Tibial artery (tissue), 4 donors: ENCODE measurements at regions of chr14 and their contacts with region 1.

Region 1: DNA sequence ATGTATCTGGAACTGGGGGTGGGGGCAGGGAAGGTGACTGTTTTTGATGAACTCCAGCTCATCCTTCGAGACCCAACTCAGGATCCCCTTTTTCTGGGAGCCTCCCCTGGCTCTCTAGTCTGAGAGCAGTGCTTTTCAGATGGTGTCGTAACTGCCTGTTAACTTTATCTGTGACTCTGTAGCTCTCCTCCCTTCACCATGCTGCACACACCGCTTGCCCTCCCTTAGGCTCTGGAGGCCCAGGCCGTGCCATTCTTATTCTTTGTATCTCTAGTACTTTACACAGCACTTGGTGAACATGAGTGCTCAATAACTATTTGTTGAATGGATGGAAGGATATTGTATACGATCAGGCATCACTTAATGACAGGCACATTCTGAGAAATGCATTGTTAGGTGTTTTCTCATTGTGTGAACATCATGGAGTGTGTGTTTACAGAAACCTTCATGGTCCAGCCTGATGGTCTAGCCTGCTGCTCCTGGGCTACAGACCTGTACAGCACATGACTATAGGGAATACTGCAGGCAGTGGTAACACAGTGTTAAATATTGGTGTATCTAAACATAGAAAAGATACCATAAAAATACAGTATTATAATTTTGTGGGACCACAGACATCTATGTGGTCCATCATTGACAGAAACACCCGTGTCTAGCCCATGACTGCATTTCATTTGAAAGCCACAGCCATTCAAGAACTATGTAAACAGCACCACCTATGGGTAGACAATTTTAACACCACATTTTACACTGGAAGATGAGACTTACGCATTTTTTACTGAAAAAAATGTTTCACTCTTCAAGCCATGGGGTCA is 91.8 kb downstream of the EML1 start:
- DNase-seq: no peak
- H3K4me3 ChIP-seq: no peak overlapping the region
- H3K27ac ChIP-seq: no peak overlapping the region
- H3K4me1 ChIP-seq: peaks cover 0 to 7% (median 4%) of the 10 kb centered on the region in 4 donors
- H3K27me3 ChIP-seq: no peaks in the 10 kb centered on the region
- CTCF ChIP-seq: peak; percentile 76 to 79

Region 2: DNA sequence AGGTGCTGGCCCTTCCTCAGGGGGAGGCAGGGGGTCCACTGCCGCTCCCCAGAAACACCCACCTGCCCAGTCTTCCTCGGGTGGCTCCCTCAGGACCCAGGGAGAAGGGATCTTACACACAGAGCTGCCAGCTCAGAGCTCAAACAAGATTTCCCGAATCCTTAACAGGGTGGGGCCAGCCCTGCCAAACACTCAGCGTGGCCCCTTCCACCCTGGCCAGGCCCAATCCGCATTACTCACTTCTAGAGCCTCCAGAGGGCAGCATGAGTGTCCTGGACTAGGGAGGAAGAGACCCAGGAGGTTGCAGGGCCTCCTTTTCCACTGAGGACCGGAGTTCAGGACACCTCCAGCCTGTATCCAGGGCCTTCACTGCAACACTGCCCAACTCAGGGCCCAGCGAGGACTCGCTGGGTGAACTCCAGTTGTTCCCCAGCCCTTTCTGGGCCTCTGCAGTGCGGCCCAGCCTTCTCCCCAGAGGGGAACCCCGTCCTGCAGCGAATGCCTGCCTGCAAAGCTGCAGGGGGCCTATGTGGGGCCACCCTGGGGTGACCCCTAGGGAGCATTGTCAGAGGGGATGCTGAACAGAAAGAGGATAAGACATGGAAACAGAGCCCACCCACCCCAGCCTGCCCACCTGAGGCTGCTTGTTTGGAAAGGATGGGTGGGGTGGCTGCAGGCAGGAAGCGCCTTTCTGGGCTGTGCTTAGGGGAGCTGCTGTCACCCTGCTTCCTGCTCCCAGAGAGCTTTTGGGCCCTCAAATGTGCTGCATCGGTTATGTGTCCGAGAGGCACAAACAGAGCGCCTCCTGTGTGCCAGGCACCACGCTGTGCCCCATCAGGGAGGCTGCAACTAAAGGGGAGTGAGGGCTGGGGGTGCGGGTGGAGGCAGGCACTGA is 360.0 kb before region 1 on chr14:
- intact Hi-C with region 1: loop called (anchors 5 kb)
- DNase-seq: no peak
- H3K4me3 ChIP-seq: no peak overlapping the region
- H3K27ac ChIP-seq: no peak overlapping the region
- H3K4me1 ChIP-seq: peaks cover 0 to 15% (median 0%) of the 10 kb centered on the region in 4 donors
- H3K27me3 ChIP-seq: no peaks in the 10 kb centered on the region
- CTCF ChIP-seq: no peak

Region 3: DNA sequence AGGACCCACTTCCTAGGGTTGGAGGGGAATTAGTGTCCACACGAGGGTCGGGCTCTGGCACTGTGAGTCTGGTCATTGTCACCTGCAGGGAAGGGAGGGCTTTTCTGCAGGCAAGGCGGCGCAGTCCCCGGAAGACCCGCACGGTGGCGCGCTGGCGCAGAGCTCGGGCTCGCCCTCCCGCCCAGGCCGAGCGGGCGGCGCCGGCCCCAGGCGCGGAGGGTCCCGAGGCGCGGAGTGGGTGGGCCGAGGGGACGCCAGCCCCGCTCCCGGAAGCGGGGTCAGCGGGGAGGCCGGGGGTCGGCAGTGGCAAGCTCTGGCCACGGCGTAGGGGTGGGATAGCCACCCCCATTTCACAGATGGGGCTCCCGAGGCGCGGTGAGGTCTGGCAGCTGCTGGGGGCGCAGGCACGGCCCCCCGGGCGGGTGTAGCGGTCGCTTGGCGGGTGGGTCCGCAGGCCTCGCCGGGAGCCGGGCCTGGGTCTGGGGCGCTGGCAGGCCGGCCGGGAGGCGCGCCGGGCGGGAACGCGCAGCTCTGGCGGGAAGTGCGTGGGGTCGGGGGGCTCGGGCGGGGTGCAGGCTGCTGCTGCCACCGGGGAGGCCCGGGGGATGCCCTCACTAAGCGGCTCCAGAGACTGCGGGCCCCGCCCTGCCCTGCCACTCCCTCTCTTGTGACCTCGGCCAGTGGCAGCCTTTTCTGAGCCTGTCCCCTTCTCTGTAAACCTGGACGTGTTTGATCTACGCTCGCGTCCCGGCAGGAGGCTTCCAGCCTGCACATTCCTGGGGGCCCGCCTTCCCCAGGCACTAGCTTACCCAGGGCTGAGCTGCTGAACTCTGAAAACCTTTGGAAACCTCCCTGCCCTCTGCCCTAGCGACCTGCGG is 154.8 kb before region 1 on chr14:
- intact Hi-C with region 1: loop called (anchors 1 kb)
- DNase-seq: peak in 1 of 2 donors; percentile 81
- H3K4me3 ChIP-seq: peak overlapping the region; percentile 50 to 54
- H3K27ac ChIP-seq: peak overlapping the region in 1 of 2 donors; percentile 27
- H3K4me1 ChIP-seq: peaks cover 0 to 48% (median 20%) of the 10 kb centered on the region in 4 donors
- H3K27me3 ChIP-seq: peaks cover 0 to 29% of the 10 kb centered on the region in 2 donors
- CTCF ChIP-seq: peak; percentile 90 to 92